ENCODE measurements at regions of chr5 and their contacts with region 1.

Region 1: GRCh38 chr5:134648425-134649162 is at the start of gene SEC24A:
- DNase-seq: peak; percentile 85 to 90
- ATAC-seq: peak; percentile 95 to 98 (median 96)
- H3K4me3 ChIP-seq: peak within 1 kb of the TSS; percentile 71 to 99 (median 88)
- H3K27ac ChIP-seq: peak within 1 kb of the TSS; percentile 88 to 99 (median 94)
- H3K4me1 ChIP-seq: peaks cover 9 to 42% (median 40%) of the 10 kb centered on the region in 9 donors
- H3K27me3 ChIP-seq: no peaks in the 10 kb centered on the region
- CTCF ChIP-seq: no peak
- total RNA-seq, gene SEC24A: 7.0 to 13.7 (median 9.1) TPM

Region 2: DNA sequence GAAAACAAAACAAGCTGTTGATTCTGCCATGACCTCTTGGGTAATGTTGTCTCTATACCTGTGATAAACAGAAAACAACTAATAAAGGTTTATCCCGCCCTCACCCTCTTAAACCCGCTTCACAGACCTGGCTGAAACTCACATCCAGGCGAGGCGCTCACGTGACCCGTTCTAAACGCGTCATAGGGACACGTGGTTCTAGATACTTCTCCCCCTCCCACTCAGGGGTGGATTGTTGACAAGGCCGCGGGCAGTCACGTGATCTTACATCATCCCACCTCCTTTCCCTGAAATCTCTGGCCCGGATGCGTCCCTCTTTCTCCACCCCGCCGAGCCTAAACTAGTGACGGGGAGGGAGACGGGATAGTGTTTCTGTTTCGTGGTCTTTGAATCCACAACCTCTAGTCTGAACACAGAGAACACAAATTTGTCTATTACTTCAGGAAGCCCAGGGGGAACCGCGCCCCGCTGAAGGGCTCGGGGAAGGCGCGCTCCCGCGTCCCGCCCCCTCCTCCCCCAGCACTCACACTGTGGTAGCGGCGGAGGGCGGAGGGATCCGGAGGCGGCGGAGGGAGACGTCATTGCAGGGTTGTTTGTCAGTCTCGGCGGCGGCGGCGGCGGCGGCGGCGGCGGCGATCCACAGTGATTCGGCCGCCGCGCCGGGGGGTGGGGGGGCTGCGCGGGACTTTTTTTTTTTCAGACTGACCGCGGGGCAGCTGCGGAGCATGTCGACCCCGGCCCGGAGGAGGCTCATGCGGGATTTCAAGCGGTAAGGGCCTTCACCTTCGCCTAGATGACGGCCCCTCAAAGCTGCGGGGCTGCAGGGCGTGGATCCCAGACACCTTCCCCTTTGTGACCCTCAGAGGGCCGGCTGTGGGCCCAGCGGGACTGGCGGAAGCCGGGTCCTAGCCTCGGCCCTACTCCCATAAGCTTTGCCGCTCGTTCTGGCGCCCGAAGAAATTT is 277.4 kb before region 1 on chr5 and contains the start of gene UBE2B:
- intact Hi-C with region 1: no loop called
- DNase-seq: peak; percentile 95 to 99
- ATAC-seq: peak; percentile 91 to 97 (median 95)
- H3K4me3 ChIP-seq: peak within 1 kb of the TSS; percentile 64 to 97 (median 84)
- H3K27ac ChIP-seq: peak within 1 kb of the TSS; percentile 90 to 100 (median 98)
- H3K4me1 ChIP-seq: peaks cover 0 to 64% (median 51%) of the 10 kb centered on the region in 9 donors
- H3K27me3 ChIP-seq: no peaks in the 10 kb centered on the region
- CTCF ChIP-seq: no peak
- total RNA-seq, gene UBE2B: 195 to 260 (median 227) TPM

Region 3: DNA sequence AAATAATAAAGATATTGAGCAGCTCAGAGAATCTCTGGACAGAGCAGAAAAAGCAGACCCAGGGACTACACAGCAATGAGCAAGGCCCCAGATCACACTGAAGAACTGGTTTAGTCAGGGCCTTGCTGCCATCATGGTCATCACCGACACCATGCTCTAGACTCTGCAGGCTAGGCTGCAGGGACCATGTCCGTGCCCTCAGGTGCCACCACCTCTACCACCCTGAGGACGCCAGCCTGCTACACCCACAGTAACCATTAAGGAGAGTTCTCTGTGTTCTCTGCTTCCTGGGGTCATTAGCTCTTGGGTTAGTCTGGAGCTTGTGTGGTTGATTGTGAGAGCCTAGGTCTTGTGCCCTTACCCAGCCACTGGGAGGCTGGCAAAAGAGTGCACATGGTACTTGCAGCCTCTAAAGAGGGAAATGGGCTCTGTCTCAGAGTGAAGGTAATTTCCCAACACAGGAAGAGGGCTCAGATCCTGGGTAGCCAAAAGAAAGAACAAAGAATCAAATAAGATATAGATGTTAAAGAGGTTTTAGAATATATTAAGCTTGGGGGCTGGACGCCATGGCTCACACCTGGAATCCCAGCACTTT is 155.0 kb before region 1 on chr5:
- intact Hi-C with region 1: no loop called
- DNase-seq: no peak
- ATAC-seq: no peak
- H3K4me3 ChIP-seq: no peak overlapping the region
- H3K27ac ChIP-seq: no peak overlapping the region
- H3K4me1 ChIP-seq: no peaks in the 10 kb centered on the region
- H3K27me3 ChIP-seq: no peaks in the 10 kb centered on the region
- CTCF ChIP-seq: no peak

Region 4: GRCh38 chr5:134626369-134627014 is 22.1 kb before region 1 on chr5:
- intact Hi-C with region 1: loop called in 1 of 10 experiments (anchors 1 kb)
- DNase-seq: no peak
- ATAC-seq: peak in 4 of 8 donors; percentile 40 to 74 (median 42)
- H3K4me3 ChIP-seq: no peak overlapping the region
- H3K27ac ChIP-seq: peak overlapping the region in 1 of 10 donors; percentile 42
- H3K4me1 ChIP-seq: peaks cover 0 to 24% (median 15%) of the 10 kb centered on the region in 9 donors
- H3K27me3 ChIP-seq: no peaks in the 10 kb centered on the region
- CTCF ChIP-seq: no peak

Region 5: DNA sequence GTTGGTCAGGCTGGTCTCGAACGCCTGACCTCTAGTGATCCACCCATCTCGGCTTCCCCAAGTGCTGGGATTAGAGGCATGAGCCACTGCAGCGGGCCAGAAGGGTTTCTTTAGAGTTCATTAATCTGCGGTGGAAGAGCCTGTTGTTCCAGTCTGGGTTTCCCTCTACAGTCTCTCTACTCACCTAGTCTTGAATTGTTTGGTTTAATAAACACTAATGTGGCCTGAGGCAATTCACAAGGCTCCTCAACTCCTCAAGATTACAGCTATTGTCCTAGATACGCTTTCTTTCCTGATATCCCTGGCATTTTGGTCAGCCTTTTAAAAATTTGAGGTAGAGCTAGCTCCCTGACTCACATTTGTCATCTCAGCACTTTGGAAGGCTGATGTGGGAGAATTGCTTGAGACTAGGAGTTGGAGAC is 11.4 kb before region 1 on chr5:
- intact Hi-C with region 1: loop called in 1 of 10 experiments (anchors 2 kb)
- DNase-seq: no peak
- ATAC-seq: no peak
- H3K4me3 ChIP-seq: no peak overlapping the region
- H3K27ac ChIP-seq: no peak overlapping the region
- H3K4me1 ChIP-seq: peaks cover 0 to 7% (median under 1%) of the 10 kb centered on the region in 9 donors
- H3K27me3 ChIP-seq: no peaks in the 10 kb centered on the region
- CTCF ChIP-seq: no peak

Measured in heart right ventricle (tissue), 16 donors.